Naive thymus-derived CD4-positive, alpha-beta T cell (primary cell): ENCODE measurements at regions of chr18 and their contacts with region 1.

Region 1: GRCh38 chr18:74901362-74902146 is 303.9 kb downstream of the ZNF407 start:
- DNase-seq: no peak
- ATAC-seq: peak; percentile 71
- H3K4me3 ChIP-seq: no peak overlapping the region
- H3K4me3 Mint-ChIP-seq: peak overlapping the region in 1 of 10 donors; percentile 9
- H3K27ac ChIP-seq: no peak overlapping the region
- H3K27ac Mint-ChIP-seq: peak overlapping the region in 1 of 9 donors; percentile 65
- H3K4me1 ChIP-seq: no peaks in the 10 kb centered on the region
- H3K4me1 Mint-ChIP-seq: peaks cover 0 to 24% (median 3%) of the 10 kb centered on the region in 7 donors
- H3K27me3 ChIP-seq: no peaks in the 10 kb centered on the region
- H3K27me3 Mint-ChIP-seq: no peaks in the 10 kb centered on the region

Region 2: DNA sequence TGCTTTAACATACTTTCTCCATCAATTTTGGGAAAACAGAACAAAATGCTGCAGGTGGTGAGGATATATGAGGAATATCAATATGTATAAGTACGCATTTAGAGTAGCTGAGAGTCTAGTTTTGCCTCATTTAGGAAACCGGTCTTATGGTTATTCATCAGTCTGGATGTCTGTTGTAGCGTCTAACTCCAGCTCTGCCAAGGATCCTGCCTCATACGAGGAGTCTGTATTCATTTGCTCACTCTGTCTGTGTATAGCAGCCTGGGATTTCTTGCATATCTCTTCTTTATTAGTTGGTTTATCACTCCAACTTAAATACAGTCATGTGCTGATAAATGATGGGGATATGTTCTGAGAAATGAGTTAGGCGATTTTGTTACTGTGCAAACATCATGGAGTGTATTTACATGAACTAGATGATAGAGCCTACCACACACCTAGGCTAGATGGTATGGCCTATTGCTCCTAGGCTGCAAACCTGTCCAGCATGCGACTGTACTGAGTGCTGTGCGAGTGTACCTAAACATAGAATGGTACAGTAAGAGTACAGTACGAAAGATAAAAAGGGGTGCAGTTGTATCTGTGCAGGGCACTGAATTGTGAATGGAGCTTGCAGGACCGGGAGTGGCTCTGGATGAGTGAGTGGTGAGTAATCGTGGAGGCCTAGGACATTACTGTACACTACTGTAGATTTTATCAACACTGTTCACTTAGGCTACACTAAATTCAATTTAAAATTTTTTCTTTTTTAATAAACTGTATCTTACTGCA is 155.7 kb before region 1 on chr18:
- CTCF ChIA-PET with region 1: no interaction called
- POLR2A ChIA-PET with region 1: no interaction called
- intact Hi-C with region 1: no loop called
- DNase-seq: no peak
- ATAC-seq: no peak
- H3K4me3 ChIP-seq: no peak overlapping the region
- H3K4me3 Mint-ChIP-seq: no peak overlapping the region
- H3K27ac ChIP-seq: no peak overlapping the region
- H3K27ac Mint-ChIP-seq: no peak overlapping the region
- H3K4me1 ChIP-seq: no peaks in the 10 kb centered on the region
- H3K4me1 Mint-ChIP-seq: peaks cover 0 to 10% (median 0%) of the 10 kb centered on the region in 7 donors
- H3K27me3 ChIP-seq: no peaks in the 10 kb centered on the region
- H3K27me3 Mint-ChIP-seq: no peaks in the 10 kb centered on the region

Region 3: GRCh38 chr18:74921057-74921820 is 19.7 kb after region 1 on chr18:
- CTCF ChIA-PET with region 1: no interaction called
- POLR2A ChIA-PET with region 1: no interaction called
- intact Hi-C with region 1: no loop called
- DNase-seq: no peak
- ATAC-seq: no peak
- H3K4me3 ChIP-seq: no peak overlapping the region
- H3K4me3 Mint-ChIP-seq: no peak overlapping the region
- H3K27ac ChIP-seq: no peak overlapping the region
- H3K27ac Mint-ChIP-seq: no peak overlapping the region
- H3K4me1 ChIP-seq: no peaks in the 10 kb centered on the region
- H3K4me1 Mint-ChIP-seq: peaks cover 0 to 5% (median 0%) of the 10 kb centered on the region in 7 donors
- H3K27me3 ChIP-seq: no peaks in the 10 kb centered on the region
- H3K27me3 Mint-ChIP-seq: no peaks in the 10 kb centered on the region

Region 4: GRCh38 chr18:75076286-75076685 is 174.7 kb after region 1 on chr18:
- CTCF ChIA-PET with region 1: no interaction called
- POLR2A ChIA-PET with region 1: interaction called, 3 read pairs
- intact Hi-C with region 1: loop called (anchors 1 kb)
- DNase-seq: no peak
- ATAC-seq: no peak
- H3K4me3 ChIP-seq: no peak overlapping the region
- H3K4me3 Mint-ChIP-seq: no peak overlapping the region
- H3K27ac ChIP-seq: no peak overlapping the region
- H3K27ac Mint-ChIP-seq: peak overlapping the region in 2 of 9 donors; percentile 12 to 19
- H3K4me1 ChIP-seq: peaks cover 10% of the 10 kb centered on the region in 2 donors
- H3K4me1 Mint-ChIP-seq: peaks cover 6 to 19% (median 11%) of the 10 kb centered on the region in 7 donors
- H3K27me3 ChIP-seq: no peaks in the 10 kb centered on the region
- H3K27me3 Mint-ChIP-seq: peaks cover 0 to 4% (median 0%) of the 10 kb centered on the region in 5 donors